MCF 10A (cell line): ENCODE measurements at regions of chr21 and their contacts with region 1.

Region 1: GRCh38 chr21:44927587-44928461 is 7.1 kb upstream of the ITGB2 start:
- DNase-seq: peak; percentile 94
- H3K4me3 Mint-ChIP-seq: peak overlapping the region; percentile 60
- H3K27ac Mint-ChIP-seq: peak overlapping the region; percentile 80
- H3K4me1 Mint-ChIP-seq: peaks cover 64% of the 10 kb centered on the region
- H3K27me3 Mint-ChIP-seq: no peaks in the 10 kb centered on the region
- CTCF ChIP-seq: no peak

Region 2: GRCh38 chr21:44510508-44511210 is 417.2 kb before region 1 on chr21:
- CTCF ChIA-PET with region 1: no interaction called
- POLR2A ChIA-PET with region 1: no interaction called
- intact Hi-C with region 1: loop called (anchors 5 kb)
- DNase-seq: peak; percentile 69
- H3K4me3 Mint-ChIP-seq: no peak overlapping the region
- H3K27ac Mint-ChIP-seq: no peak overlapping the region
- H3K4me1 Mint-ChIP-seq: peaks cover 6% of the 10 kb centered on the region
- H3K27me3 Mint-ChIP-seq: peaks cover 23% of the 10 kb centered on the region
- CTCF ChIP-seq: peak; percentile 86

Region 3: DNA sequence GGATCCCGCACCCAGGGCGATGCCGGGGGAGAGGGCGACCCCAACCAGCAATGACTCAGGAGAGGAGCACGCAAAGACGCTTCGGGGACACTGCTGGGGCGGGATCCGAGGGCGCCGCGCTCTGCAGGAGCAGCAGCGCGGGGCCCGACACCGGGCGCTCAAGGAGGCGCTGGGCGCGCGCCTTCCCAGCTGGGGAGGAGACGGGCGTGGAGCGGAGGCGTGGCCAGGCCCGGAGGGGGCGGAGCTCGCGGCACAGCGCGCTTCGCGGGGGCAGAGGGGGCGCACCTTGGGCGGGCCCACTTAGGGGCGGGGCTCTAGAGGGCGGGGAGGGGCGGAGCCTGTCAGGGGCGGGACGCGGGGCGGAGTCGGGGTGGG is 110.3 kb before region 1 on chr21:
- CTCF ChIA-PET with region 1: no interaction called
- POLR2A ChIA-PET with region 1: no interaction called
- intact Hi-C with region 1: loop called (anchors 5 kb)
- DNase-seq: peak; percentile 84
- H3K4me3 Mint-ChIP-seq: peak overlapping the region; percentile 72
- H3K27ac Mint-ChIP-seq: no peak overlapping the region
- H3K4me1 Mint-ChIP-seq: peaks cover 10% of the 10 kb centered on the region
- H3K27me3 Mint-ChIP-seq: no peaks in the 10 kb centered on the region
- CTCF ChIP-seq: no peak

Region 4: GRCh38 chr21:44873356-44874239 is 54.2 kb before region 1 on chr21 and contains the start of gene PTTG1IP:
- CTCF ChIA-PET with region 1: interaction called, 4 read pairs
- POLR2A ChIA-PET with region 1: interaction called, 20 read pairs
- intact Hi-C with region 1: loop called (anchors 2 kb)
- DNase-seq: peak; percentile 98
- H3K4me3 Mint-ChIP-seq: peak within 1 kb of the TSS; percentile 80
- H3K27ac Mint-ChIP-seq: peak within 1 kb of the TSS; percentile 91
- H3K4me1 Mint-ChIP-seq: peaks cover 40% of the 10 kb centered on the region
- H3K27me3 Mint-ChIP-seq: no peaks in the 10 kb centered on the region
- CTCF ChIP-seq: no peak
- total RNA-seq, gene PTTG1IP: 326 and 338 TPM in 2 replicates

Region 5: GRCh38 chr21:44880762-44881585 is 46.9 kb before region 1 on chr21:
- CTCF ChIA-PET with region 1: interaction called, 3 read pairs
- POLR2A ChIA-PET with region 1: interaction called, 16 read pairs
- intact Hi-C with region 1: no loop called
- DNase-seq: peak; percentile 18
- H3K4me3 Mint-ChIP-seq: no peak overlapping the region
- H3K27ac Mint-ChIP-seq: peak overlapping the region; percentile 98
- H3K4me1 Mint-ChIP-seq: peaks cover 32% of the 10 kb centered on the region
- H3K27me3 Mint-ChIP-seq: no peaks in the 10 kb centered on the region
- CTCF ChIP-seq: no peak

Region 6: GRCh38 chr21:44892536-44893277 is 35.1 kb before region 1 on chr21:
- CTCF ChIA-PET with region 1: interaction called, 6 read pairs
- POLR2A ChIA-PET with region 1: no interaction called
- intact Hi-C with region 1: loop called (anchors 1 kb)
- DNase-seq: peak; percentile 70
- H3K4me3 Mint-ChIP-seq: no peak overlapping the region
- H3K27ac Mint-ChIP-seq: no peak overlapping the region
- H3K4me1 Mint-ChIP-seq: peaks cover 6% of the 10 kb centered on the region
- H3K27me3 Mint-ChIP-seq: no peaks in the 10 kb centered on the region
- CTCF ChIP-seq: peak; percentile 84

Region 7: DNA sequence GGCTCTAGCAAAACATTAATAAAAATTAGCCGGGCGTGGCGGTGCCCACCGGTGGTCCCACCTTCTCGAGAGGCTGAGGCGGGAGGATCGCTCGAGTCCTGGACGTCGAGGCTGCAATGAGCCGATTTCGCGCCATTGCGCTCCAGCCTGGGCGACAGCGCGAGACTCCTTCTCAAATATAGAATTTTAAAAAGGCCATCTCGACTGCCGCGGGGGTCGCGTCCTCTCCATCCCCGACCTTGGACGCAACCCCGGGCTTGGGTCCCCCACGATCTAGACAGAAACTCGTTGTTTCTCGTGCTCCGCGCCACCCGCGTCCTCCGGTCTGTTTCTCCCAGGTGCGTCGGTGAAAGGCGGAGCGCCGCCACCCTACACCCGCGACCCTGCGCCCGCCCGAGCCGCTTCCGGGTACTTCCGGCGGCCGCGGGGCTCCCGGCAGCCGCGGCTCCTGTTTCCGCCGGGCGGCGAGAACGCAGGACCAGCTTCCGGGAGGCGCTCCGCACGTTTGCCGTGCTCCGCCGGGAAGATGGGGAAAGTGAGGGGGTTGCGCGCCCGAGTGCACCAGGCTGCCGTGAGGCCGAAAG is 11.8 kb after region 1 on chr21 and contains the start of gene SLX9:
- CTCF ChIA-PET with region 1: no interaction called
- POLR2A ChIA-PET with region 1: interaction called, 18 read pairs
- intact Hi-C with region 1: no loop called
- DNase-seq: peak; percentile 77
- H3K4me3 Mint-ChIP-seq: peak within 1 kb of the TSS; percentile 85
- H3K27ac Mint-ChIP-seq: peak within 1 kb of the TSS; percentile 61
- H3K4me1 Mint-ChIP-seq: peaks cover 30% of the 10 kb centered on the region
- H3K27me3 Mint-ChIP-seq: no peaks in the 10 kb centered on the region
- CTCF ChIP-seq: no peak
- total RNA-seq, gene SLX9: 40.4 and 58.7 TPM in 2 replicates